Transverse colon (tissue), 4 donors: ENCODE measurements at regions of chr7 and their contacts with region 1.

Region 1: GRCh38 chr7:144437370-144438191 is 34.1 kb upstream of the NOBOX start:
- DNase-seq: peak; percentile 76
- H3K4me3 ChIP-seq: no peak overlapping the region
- H3K27ac ChIP-seq: no peak overlapping the region
- H3K4me1 ChIP-seq: no peaks in the 10 kb centered on the region
- H3K27me3 ChIP-seq: no peaks in the 10 kb centered on the region
- CTCF ChIP-seq: peak; percentile 48 to 66 (median 56)
- EP300 ChIP-seq: no peak
- POLR2A ChIP-seq: no peak

Region 2: GRCh38 chr7:143948733-143949132 is 488.8 kb before region 1 on chr7:
- in situ Hi-C with region 1: no loop called
- intact Hi-C with region 1: loop called (anchors 5 kb)
- DNase-seq: no peak
- H3K4me3 ChIP-seq: no peak overlapping the region
- H3K27ac ChIP-seq: no peak overlapping the region
- H3K4me1 ChIP-seq: no peaks in the 10 kb centered on the region
- H3K27me3 ChIP-seq: no peaks in the 10 kb centered on the region
- CTCF ChIP-seq: no peak
- EP300 ChIP-seq: no peak
- POLR2A ChIP-seq: no peak